Caco-2 (cell line): ENCODE measurements at regions of chr17 and their contacts with region 1.

Region 1: GRCh38 chr17:78378225-78379130 is at the start of gene PGS1:
- DNase-seq: peak; percentile 75 to 86
- H3K4me3 ChIP-seq: peak within 1 kb of the TSS; percentile 96
- H3K4me3 Mint-ChIP-seq: peak within 1 kb of the TSS; percentile 93
- H3K27ac Mint-ChIP-seq: peak within 1 kb of the TSS; percentile 94
- H3K4me1 ChIP-seq: peaks cover 43% of the 10 kb centered on the region
- H3K4me1 Mint-ChIP-seq: peaks cover 48% of the 10 kb centered on the region
- H3K27me3 ChIP-seq: no peaks in the 10 kb centered on the region
- H3K27me3 Mint-ChIP-seq: no peaks in the 10 kb centered on the region
- CTCF ChIP-seq: no peak
- total RNA-seq, gene PGS1: 54.1 and 55.2 TPM in 2 replicates

Region 2: GRCh38 chr17:78272181-78272913 is 106.1 kb before region 1 on chr17:
- CTCF ChIA-PET with region 1: no interaction called
- POLR2A ChIA-PET with region 1: no interaction called
- intact Hi-C with region 1: no loop called
- DNase-seq: peak; percentile 86 to 91
- H3K4me3 ChIP-seq: no peak overlapping the region
- H3K4me3 Mint-ChIP-seq: peak overlapping the region; percentile 63
- H3K27ac Mint-ChIP-seq: peak overlapping the region; percentile 87
- H3K4me1 ChIP-seq: peaks cover 53% of the 10 kb centered on the region
- H3K4me1 Mint-ChIP-seq: peaks cover 24% of the 10 kb centered on the region
- H3K27me3 ChIP-seq: no peaks in the 10 kb centered on the region
- H3K27me3 Mint-ChIP-seq: no peaks in the 10 kb centered on the region
- CTCF ChIP-seq: no peak

Region 3: GRCh38 chr17:78365561-78366108 is 12.8 kb before region 1 on chr17:
- CTCF ChIA-PET with region 1: interaction called, 4 read pairs
- POLR2A ChIA-PET with region 1: interaction called, 4 read pairs
- intact Hi-C with region 1: loop called (anchors 1 kb)
- DNase-seq: peak; percentile 92 to 97
- H3K4me3 ChIP-seq: no peak overlapping the region
- H3K4me3 Mint-ChIP-seq: peak overlapping the region; percentile 67
- H3K27ac Mint-ChIP-seq: peak overlapping the region; percentile 100
- H3K4me1 ChIP-seq: peaks cover 61% of the 10 kb centered on the region
- H3K4me1 Mint-ChIP-seq: peaks cover 46% of the 10 kb centered on the region
- H3K27me3 ChIP-seq: no peaks in the 10 kb centered on the region
- H3K27me3 Mint-ChIP-seq: no peaks in the 10 kb centered on the region
- CTCF ChIP-seq: no peak